Posterior vena cava (tissue), 2 donors: ENCODE measurements at regions of chr7 and their contacts with region 1.

Region 1: GRCh38 chr7:39339591-39339990 is 226.6 kb upstream of the YAE1 start:
- DNase-seq: no peak

Region 2: DNA sequence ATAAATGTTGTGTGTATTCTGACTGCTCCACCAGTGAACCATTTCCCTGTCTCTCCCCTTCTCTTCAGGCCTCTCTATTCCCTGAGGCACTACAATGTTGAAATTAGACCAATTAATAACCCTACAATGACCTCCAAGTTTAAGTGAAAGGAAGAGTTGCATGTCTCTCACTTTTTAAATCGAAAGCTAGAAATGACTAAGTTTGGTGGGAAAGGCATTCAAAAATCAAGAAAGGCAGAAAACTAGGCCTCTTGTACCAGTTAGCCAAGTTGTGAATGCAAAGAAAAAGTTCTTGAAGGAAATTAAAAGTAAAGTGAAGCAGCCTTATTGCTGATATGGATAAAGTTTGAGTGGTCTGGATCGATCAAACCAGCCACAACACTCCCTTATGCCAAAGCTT is 28.4 kb after region 1 on chr7:
- intact Hi-C with region 1: no loop called
- DNase-seq: no peak

Region 3: DNA sequence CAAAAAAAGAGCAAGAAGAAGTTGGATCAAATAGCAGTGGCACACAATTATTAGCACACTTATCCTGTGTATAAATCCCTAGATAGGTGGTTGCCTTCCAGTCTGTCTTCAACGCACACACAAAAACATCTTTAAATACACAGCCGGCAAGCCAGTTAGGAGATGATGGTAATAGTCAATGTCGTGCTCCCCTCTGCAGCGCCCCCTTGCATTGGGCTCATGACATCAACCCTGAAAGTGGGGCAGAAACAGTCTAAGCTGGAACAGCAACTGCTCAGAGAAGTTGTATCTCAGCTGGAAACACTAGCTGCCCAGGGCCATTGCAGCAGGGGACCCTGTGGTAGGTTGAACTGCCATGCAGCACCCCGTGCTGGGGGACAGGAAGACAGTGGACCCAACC is 47.1 kb after region 1 on chr7:
- intact Hi-C with region 1: loop called in 1 of 2 experiments (anchors 2 kb)
- DNase-seq: no peak